Naive thymus-derived CD8-positive, alpha-beta T cell (primary cell): ENCODE measurements at regions of chr5 and their contacts with region 1.

Region 1: GRCh38 chr5:157142317-157143126 is at the start of gene MED7:
- DNase-seq: peak; percentile 71 to 98 (median 93)
- ATAC-seq: peak; percentile 95 to 96
- H3K4me3 Mint-ChIP-seq: peak within 1 kb of the TSS; percentile 92 to 99 (median 96)
- H3K27ac Mint-ChIP-seq: peak within 1 kb of the TSS; percentile 93 to 100 (median 97)
- H3K4me1 Mint-ChIP-seq: peaks cover 16 to 38% (median 35%) of the 10 kb centered on the region in 4 donors
- H3K27me3 Mint-ChIP-seq: no peaks in the 10 kb centered on the region
- polyA plus RNA-seq, gene MED7: 12.0 to 18.2 (median 15.0) TPM

Region 2: DNA sequence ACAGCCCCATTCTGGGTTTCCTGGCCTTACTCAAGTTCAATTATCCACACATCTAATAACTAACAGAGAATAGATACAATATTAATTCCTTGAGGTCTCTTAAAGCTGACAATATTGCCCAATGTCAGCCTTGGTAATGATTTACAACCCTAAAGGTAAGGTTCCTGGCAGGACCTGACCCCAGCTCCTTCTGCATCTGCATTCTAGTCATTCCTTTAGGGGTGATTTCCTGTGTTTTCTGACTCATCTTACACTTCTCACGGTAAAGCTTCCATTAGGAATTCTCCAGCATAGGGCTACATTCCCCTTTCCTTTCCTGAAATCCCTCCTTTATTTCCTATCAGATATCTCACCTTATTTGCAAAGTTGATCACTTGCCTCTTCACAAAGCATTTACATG is 92.9 kb before region 1 on chr5:
- POLR2A ChIA-PET with region 1: interaction called, 12 read pairs
- DNase-seq: no peak
- ATAC-seq: peak; percentile 16 to 35
- H3K4me3 Mint-ChIP-seq: peak overlapping the region; percentile 78 to 92 (median 86)
- H3K27ac Mint-ChIP-seq: peak overlapping the region; percentile 85 to 96 (median 91)
- H3K4me1 Mint-ChIP-seq: peaks cover 34 to 68% (median 56%) of the 10 kb centered on the region in 4 donors
- H3K27me3 Mint-ChIP-seq: no peaks in the 10 kb centered on the region

Region 3: GRCh38 chr5:157132281-157132612 is 10.3 kb before region 1 on chr5:
- POLR2A ChIA-PET with region 1: interaction called, 23 read pairs
- DNase-seq: no peak
- ATAC-seq: no peak
- H3K4me3 Mint-ChIP-seq: no peak overlapping the region
- H3K27ac Mint-ChIP-seq: no peak overlapping the region
- H3K4me1 Mint-ChIP-seq: peaks cover 8 to 29% (median 23%) of the 10 kb centered on the region in 4 donors
- H3K27me3 Mint-ChIP-seq: no peaks in the 10 kb centered on the region

Region 4: GRCh38 chr5:157189223-157189622 is 46.7 kb after region 1 on chr5:
- POLR2A ChIA-PET with region 1: interaction called, 13 read pairs
- DNase-seq: no peak
- ATAC-seq: no peak
- H3K4me3 Mint-ChIP-seq: peak overlapping the region; percentile 80 to 100 (median 96)
- H3K27ac Mint-ChIP-seq: peak overlapping the region; percentile 71 to 99 (median 94)
- H3K4me1 Mint-ChIP-seq: peaks cover 43 to 92% (median 85%) of the 10 kb centered on the region in 4 donors
- H3K27me3 Mint-ChIP-seq: no peaks in the 10 kb centered on the region

Region 5: GRCh38 chr5:157219491-157220271 is 77.2 kb after region 1 on chr5:
- POLR2A ChIA-PET with region 1: interaction called, 31 read pairs
- DNase-seq: no peak
- ATAC-seq: no peak
- H3K4me3 Mint-ChIP-seq: peak overlapping the region in 9 of 10 donors; percentile 27 to 77 (median 46)
- H3K27ac Mint-ChIP-seq: peak overlapping the region; percentile 81 to 98 (median 90)
- H3K4me1 Mint-ChIP-seq: peaks cover 53 to 88% (median 84%) of the 10 kb centered on the region in 4 donors
- H3K27me3 Mint-ChIP-seq: no peaks in the 10 kb centered on the region

Region 6: DNA sequence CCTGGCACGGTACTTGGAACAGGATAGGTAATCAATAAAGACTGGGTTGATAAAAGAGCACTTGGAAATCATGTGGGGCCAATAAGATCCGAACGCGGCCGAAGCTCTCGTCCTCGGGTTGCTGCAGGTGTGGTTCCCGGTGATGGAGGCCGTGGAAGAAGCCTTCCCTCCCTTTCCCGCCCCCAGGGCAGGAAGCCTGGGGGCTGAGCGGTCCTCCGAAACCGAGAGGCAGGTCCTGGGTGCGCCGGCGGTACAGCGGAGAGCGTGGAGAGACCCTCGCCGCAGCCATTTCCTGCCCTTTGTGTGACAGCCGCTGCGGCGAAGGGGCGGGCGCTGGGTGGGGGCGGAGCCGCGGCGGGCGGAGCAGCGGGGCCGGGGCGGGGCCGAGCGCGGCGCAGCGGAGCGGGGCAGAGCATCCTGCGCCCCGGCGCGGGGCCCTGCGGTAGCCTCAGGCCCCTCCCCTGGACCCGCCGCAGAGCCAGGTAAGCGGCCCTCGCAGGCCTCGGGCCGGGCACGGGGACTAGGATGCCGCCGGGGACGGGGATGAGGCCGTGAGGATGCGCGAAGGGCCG is 123.3 kb after region 1 on chr5 and contains the start of gene CYFIP2:
- POLR2A ChIA-PET with region 1: interaction called, 24 read pairs
- DNase-seq: peak; percentile 79 to 91 (median 86)
- ATAC-seq: peak; percentile 81 to 85
- H3K4me3 Mint-ChIP-seq: peak within 1 kb of the TSS; percentile 93 to 98 (median 96)
- H3K27ac Mint-ChIP-seq: peak within 1 kb of the TSS; percentile 97 to 99 (median 98)
- H3K4me1 Mint-ChIP-seq: peaks cover 47 to 77% (median 74%) of the 10 kb centered on the region in 4 donors
- H3K27me3 Mint-ChIP-seq: no peaks in the 10 kb centered on the region
- polyA plus RNA-seq, gene CYFIP2: 417 to 668 (median 506) TPM